CD8-positive, alpha-beta T cell (primary cell): ENCODE measurements at regions of chr1 and their contacts with region 1.

Region 1: DNA sequence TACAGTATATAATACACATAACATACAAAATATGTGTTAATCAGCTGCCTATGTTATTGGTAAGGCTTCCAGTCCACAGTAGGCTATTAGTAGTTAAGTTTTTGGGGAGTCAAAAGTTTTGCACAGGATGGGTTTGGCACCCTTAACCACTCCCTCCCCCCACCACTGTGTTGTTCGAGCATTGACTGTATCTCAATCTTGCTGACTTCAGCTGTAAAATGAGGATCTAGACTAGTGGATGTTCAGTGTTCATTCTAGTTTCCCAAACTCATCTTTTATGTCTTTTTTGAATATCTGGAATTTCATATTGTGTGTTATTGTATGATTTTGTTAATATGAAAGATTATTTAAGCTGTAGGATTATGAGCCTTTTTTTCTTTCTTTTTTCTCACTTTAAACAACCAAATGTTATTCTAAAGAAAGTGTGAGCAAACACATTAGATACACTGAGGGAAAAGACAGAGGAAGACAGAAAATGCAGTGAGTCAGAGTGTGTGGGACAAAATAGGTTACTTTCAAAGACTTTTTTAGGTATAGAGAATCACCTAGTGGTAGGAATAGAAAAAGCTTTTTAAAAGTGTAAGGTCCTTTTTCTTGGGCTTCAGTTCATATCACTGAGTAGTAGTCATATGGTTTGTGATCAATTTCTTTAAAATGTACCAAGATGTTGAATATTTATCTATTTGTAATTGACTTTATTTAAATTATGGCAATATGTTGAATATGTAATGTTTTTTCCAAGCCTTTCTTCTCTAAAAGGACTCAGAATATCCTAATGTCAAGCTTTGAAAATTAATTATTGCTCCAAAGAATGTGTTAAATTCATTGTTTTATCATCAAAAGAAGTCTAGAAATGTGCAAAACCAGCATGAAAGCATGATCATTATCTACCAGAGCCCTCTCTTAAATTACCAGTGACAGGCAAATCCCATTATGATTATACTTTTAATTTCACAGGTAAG is 17.9 kb upstream of the CENPF start:
- DNase-seq: no peak
- ATAC-seq: no peak
- H3K4me3 ChIP-seq: no peak overlapping the region
- H3K4me3 Mint-ChIP-seq: no peak overlapping the region
- H3K27ac ChIP-seq: no peak overlapping the region
- H3K27ac Mint-ChIP-seq: no peak overlapping the region
- H3K4me1 ChIP-seq: no peaks in the 10 kb centered on the region
- H3K4me1 Mint-ChIP-seq: no peaks in the 10 kb centered on the region
- H3K27me3 ChIP-seq: peaks cover 0 to 3% of the 10 kb centered on the region in 2 experiments
- H3K27me3 Mint-ChIP-seq: peaks cover 10% of the 10 kb centered on the region
- CTCF ChIP-seq: peak; percentile 37

Region 2: GRCh38 chr1:214386747-214387146 is 198.3 kb before region 1 on chr1:
- CTCF ChIA-PET with region 1: interaction called, 3 read pairs
- POLR2A ChIA-PET with region 1: no interaction called
- intact Hi-C with region 1: loop called in 1 of 2 experiments (anchors 5 kb)
- DNase-seq: no peak
- ATAC-seq: no peak
- H3K4me3 ChIP-seq: no peak overlapping the region
- H3K4me3 Mint-ChIP-seq: no peak overlapping the region
- H3K27ac ChIP-seq: no peak overlapping the region
- H3K27ac Mint-ChIP-seq: no peak overlapping the region
- H3K4me1 ChIP-seq: no peaks in the 10 kb centered on the region
- H3K4me1 Mint-ChIP-seq: no peaks in the 10 kb centered on the region
- H3K27me3 ChIP-seq: no peaks in the 10 kb centered on the region
- H3K27me3 Mint-ChIP-seq: no peaks in the 10 kb centered on the region
- CTCF ChIP-seq: no peak